ENCODE measurements at regions of chr11 and their contacts with region 1.

Region 1: DNA sequence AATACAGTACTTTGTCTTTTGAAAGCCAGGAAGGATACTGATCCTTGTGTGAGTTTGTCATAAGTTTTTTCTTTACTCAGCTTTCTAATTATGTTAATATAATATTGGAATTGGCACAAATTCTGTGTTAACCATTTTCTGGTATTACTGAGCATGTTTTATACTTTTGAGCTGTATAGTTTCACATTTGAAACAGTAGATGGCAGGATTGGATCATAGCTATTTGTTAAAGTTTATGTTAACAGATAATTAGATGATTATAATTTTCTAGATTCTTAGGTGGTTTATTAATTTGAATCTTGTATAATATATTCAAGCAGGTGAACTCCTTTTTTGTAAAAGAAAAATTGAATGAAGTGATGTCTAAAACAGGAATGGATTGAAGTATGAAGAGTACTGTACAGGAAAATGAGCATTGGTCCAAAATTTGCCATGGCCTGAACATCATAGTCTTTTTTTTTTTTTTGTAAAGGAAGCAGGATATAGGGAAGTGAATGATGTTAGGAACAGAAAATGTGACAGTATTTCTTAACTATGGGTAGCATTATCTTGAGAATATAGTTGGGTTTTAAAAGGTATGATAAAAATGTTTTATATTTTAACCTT is 102.0 kb downstream of the CYP2R1 start:
- DNase-seq: no peak
- H3K4me3 Mint-ChIP-seq: no peak overlapping the region
- H3K27ac Mint-ChIP-seq: no peak overlapping the region
- H3K4me1 Mint-ChIP-seq: no peaks in the 10 kb centered on the region
- H3K27me3 Mint-ChIP-seq: no peaks in the 10 kb centered on the region
- CTCF ChIP-seq: peak; percentile 37

Region 2: GRCh38 chr11:15074206-15075161 is 284.5 kb after region 1 on chr11:
- CTCF ChIA-PET with region 1: interaction called, 8 read pairs
- intact Hi-C with region 1: loop called (anchors 1 kb)
- DNase-seq: peak; percentile 94
- H3K4me3 Mint-ChIP-seq: peak overlapping the region; percentile 78
- H3K27ac Mint-ChIP-seq: no peak overlapping the region
- H3K4me1 Mint-ChIP-seq: peaks cover 17% of the 10 kb centered on the region
- H3K27me3 Mint-ChIP-seq: peaks cover 70% of the 10 kb centered on the region
- CTCF ChIP-seq: peak; percentile 90

Region 3: GRCh38 chr11:15159085-15159484 is 369.1 kb after region 1 on chr11:
- CTCF ChIA-PET with region 1: no interaction called
- intact Hi-C with region 1: no loop called
- DNase-seq: peak; percentile 12
- H3K4me3 Mint-ChIP-seq: no peak overlapping the region
- H3K27ac Mint-ChIP-seq: no peak overlapping the region
- H3K4me1 Mint-ChIP-seq: peaks cover 6% of the 10 kb centered on the region
- H3K27me3 Mint-ChIP-seq: peaks cover 32% of the 10 kb centered on the region
- CTCF ChIP-seq: peak; percentile 46

Region 4: GRCh38 chr11:15208378-15209222 is 418.6 kb after region 1 on chr11:
- CTCF ChIA-PET with region 1: no interaction called
- intact Hi-C with region 1: loop called (anchors 5 kb)
- DNase-seq: peak; percentile 86
- H3K4me3 Mint-ChIP-seq: no peak overlapping the region
- H3K27ac Mint-ChIP-seq: no peak overlapping the region
- H3K4me1 Mint-ChIP-seq: peaks cover under 1% of the 10 kb centered on the region
- H3K27me3 Mint-ChIP-seq: peaks cover 47% of the 10 kb centered on the region
- CTCF ChIP-seq: peak; percentile 92